Esophagus squamous epithelium (tissue), 5 donors: ENCODE measurements at regions of chr17 and their contacts with region 1.

Region 1: GRCh38 chr17:34434052-34434451 is 71.0 kb upstream of the CCL1 start:
- DNase-seq: no peak
- H3K4me3 ChIP-seq: no peak overlapping the region
- H3K27ac ChIP-seq: no peak overlapping the region
- H3K4me1 ChIP-seq: no peaks in the 10 kb centered on the region
- H3K27me3 ChIP-seq: peaks cover 0 to 81% (median 0%) of the 10 kb centered on the region in 4 donors
- CTCF ChIP-seq: no peak
- POLR2A ChIP-seq: no peak

Region 2: DNA sequence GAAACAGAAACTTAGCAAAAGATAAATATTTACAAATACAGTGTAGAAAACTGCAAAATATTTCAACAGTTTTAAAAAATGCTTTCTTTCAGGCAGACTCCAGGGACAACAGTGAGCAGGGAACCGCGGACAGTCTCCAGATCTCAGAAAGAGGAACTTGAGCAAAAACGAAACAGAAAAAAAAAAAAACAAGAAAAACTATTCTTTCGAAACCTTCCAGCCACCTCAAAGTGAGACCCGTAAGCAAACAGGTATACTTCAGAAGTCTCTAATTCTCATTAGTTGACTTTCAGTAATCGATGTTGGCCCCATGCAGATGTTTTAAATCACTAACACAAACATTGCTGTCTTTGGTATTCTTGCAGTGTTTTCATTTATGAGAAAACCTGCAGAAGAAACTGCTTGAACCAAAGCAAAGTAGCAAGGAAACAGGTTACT is 55.4 kb before region 1 on chr17:
- intact Hi-C with region 1: loop called (anchors 10 kb)
- DNase-seq: no peak
- H3K4me3 ChIP-seq: no peak overlapping the region
- H3K27ac ChIP-seq: no peak overlapping the region
- H3K4me1 ChIP-seq: peaks cover 0 to 17% (median 0%) of the 10 kb centered on the region in 3 donors
- H3K27me3 ChIP-seq: peaks cover 0 to 19% (median 0%) of the 10 kb centered on the region in 4 donors
- CTCF ChIP-seq: no peak
- POLR2A ChIP-seq: no peak